MCF 10A (cell line): ENCODE measurements at regions of chr2 and their contacts with region 1.

Region 1: GRCh38 chr2:127293748-127294562 is at the start of gene ERCC3:
- DNase-seq: peak; percentile 82
- H3K4me3 Mint-ChIP-seq: peak within 1 kb of the TSS; percentile 89
- H3K27ac Mint-ChIP-seq: peak within 1 kb of the TSS; percentile 87
- H3K4me1 Mint-ChIP-seq: peaks cover 14% of the 10 kb centered on the region
- H3K27me3 Mint-ChIP-seq: no peaks in the 10 kb centered on the region
- CTCF ChIP-seq: no peak
- total RNA-seq, gene ERCC3: 34.9 and 38.2 TPM in 2 replicates

Region 2: DNA sequence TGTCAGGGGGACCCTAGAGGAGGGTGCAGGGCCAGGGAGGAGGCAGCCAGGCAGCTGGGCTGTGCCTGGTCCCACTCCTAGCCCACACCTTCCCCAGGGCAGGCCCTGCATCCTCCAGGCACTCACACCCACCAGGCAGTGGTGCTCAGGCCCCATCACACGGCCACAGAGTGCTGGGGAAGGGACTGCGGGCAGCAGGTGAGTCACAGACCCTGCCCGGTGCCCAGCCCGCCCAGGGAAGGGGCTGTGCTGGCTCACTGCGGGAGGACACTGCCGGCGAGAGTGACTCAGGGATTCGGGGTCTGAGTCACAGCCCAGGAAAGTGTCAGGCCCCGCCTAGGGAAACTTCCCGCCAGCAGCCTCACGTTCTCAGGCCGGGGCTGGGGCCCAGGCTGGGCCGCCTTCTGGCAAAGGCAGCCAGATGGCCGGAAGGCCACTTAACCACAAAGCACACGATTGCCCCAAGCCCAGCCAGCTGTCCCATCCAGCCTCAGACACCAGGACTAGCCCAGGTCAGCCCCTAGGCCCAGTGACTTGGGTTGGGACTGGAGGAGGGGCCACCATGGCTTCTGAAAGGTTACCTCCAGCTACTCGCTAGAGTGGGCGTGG is 229.2 kb before region 1 on chr2:
- CTCF ChIA-PET with region 1: interaction called, 6 read pairs
- POLR2A ChIA-PET with region 1: interaction called, 5 read pairs
- intact Hi-C with region 1: loop called (anchors 5 kb)
- DNase-seq: peak; percentile 98
- H3K4me3 Mint-ChIP-seq: no peak overlapping the region
- H3K27ac Mint-ChIP-seq: peak overlapping the region; percentile 84
- H3K4me1 Mint-ChIP-seq: peaks cover 26% of the 10 kb centered on the region
- H3K27me3 Mint-ChIP-seq: no peaks in the 10 kb centered on the region
- CTCF ChIP-seq: peak; percentile 13

Region 3: GRCh38 chr2:127106951-127107621 is 186.9 kb before region 1 on chr2 and contains the start of gene BIN1:
- CTCF ChIA-PET with region 1: no interaction called
- POLR2A ChIA-PET with region 1: interaction called, 16 read pairs
- intact Hi-C with region 1: no loop called
- DNase-seq: peak; percentile 88
- H3K4me3 Mint-ChIP-seq: peak within 1 kb of the TSS; percentile 80
- H3K27ac Mint-ChIP-seq: no peak within 1 kb of the TSS
- H3K4me1 Mint-ChIP-seq: peaks cover 19% of the 10 kb centered on the region
- H3K27me3 Mint-ChIP-seq: no peaks in the 10 kb centered on the region
- CTCF ChIP-seq: no peak
- total RNA-seq, gene BIN1: 22.4 and 29.6 TPM in 2 replicates

Region 4: DNA sequence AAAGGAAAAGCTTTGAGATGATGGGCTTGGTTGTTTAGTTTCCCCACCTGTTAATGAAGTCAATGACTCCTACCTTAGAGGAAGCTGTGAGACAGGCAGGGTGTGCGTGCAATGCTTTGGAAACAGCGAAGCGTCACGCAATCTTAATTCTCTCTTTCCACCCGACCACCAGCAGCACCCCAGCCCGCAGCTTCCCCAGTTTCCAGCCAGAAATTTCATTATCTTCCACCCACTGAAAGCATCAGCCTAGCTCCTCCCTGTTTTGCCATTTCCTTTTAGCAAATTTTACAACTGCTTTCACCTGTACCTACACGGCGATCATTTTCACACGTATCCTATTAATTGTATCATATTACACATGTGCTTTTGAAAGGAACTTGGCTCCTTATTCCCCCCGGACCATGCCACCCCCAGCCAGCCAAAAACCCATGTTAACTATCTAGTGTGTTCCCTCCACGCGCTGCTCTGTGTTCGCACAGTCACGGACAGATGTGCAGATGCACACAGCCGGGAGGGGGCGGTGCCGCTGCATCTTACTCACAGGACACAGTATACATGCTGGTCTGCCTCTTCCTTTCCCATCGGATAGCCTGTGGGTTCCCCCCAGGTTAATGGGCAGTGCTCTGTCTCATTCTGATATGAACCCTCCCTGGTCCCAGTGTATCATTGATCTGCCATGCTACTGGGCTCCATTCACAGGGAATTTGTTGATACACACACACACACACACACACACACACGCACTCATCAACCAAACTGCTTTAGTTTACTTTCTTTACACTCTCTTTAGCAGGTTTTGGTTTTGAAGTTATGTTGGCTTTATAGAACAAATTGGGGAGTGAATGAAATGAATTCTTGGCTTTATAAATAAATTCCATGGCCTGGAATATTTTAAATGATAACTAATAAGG is 96.2 kb before region 1 on chr2:
- CTCF ChIA-PET with region 1: interaction called, 7 read pairs
- POLR2A ChIA-PET with region 1: interaction called, 5 read pairs
- intact Hi-C with region 1: loop called (anchors 1 kb)
- DNase-seq: peak; percentile 77
- H3K4me3 Mint-ChIP-seq: peak overlapping the region; percentile 9
- H3K27ac Mint-ChIP-seq: no peak overlapping the region
- H3K4me1 Mint-ChIP-seq: peaks cover 6% of the 10 kb centered on the region
- H3K27me3 Mint-ChIP-seq: no peaks in the 10 kb centered on the region
- CTCF ChIP-seq: peak; percentile 77

Region 5: GRCh38 chr2:127217485-127218321 is 76.3 kb before region 1 on chr2:
- CTCF ChIA-PET with region 1: no interaction called
- POLR2A ChIA-PET with region 1: interaction called, 11 read pairs
- intact Hi-C with region 1: no loop called
- DNase-seq: peak; percentile 90
- H3K4me3 Mint-ChIP-seq: peak overlapping the region; percentile 74
- H3K27ac Mint-ChIP-seq: peak overlapping the region; percentile 9
- H3K4me1 Mint-ChIP-seq: peaks cover 12% of the 10 kb centered on the region
- H3K27me3 Mint-ChIP-seq: no peaks in the 10 kb centered on the region
- CTCF ChIP-seq: no peak

Region 6: GRCh38 chr2:127371037-127371436 is 77.1 kb after region 1 on chr2:
- CTCF ChIA-PET with region 1: no interaction called
- POLR2A ChIA-PET with region 1: no interaction called
- intact Hi-C with region 1: no loop called
- DNase-seq: no peak
- H3K4me3 Mint-ChIP-seq: no peak overlapping the region
- H3K27ac Mint-ChIP-seq: no peak overlapping the region
- H3K4me1 Mint-ChIP-seq: no peaks in the 10 kb centered on the region
- H3K27me3 Mint-ChIP-seq: no peaks in the 10 kb centered on the region
- CTCF ChIP-seq: no peak